ENCODE measurements at regions of chr5 and their contacts with region 1.

Region 1: DNA sequence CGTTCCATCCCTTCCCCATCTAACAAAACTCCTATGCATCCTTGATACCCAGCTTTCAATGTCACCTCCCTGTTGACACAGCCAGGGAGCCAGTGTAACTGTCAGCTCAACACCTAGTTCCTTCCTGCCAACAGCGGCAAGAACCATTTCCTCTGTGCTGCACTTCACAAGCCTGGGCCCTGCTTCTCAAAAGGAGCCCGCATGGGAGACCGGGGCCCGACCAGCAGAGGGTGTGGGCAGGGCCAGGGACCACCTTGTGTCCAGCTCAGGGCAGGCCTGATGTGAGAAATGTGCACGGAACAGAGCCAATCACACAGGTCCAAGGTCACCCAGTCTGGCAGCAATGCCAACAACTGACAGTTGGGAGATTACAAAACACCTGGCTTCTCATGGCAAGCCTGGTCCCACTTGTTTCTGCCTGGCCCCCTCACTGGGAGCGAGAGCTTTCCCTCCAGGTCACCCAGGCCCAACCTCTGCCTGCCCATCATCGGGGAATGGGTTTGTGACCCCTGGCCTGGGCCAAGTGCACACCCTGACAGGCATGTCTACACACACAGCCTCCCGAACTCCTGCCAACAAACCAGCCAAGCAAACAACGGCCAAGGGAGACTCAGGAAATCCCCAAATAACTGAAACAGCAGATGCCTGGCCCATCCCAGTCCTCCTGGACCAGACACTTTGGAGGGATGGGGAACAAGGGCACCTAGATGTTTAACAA is 3.1 kb downstream of the RNF44 start:
- DNase-seq: peak in 1 of 2 donors; percentile 35
- H3K4me3 ChIP-seq: no peak overlapping the region
- H3K27ac ChIP-seq: peak overlapping the region; percentile 26 to 95
- H3K4me1 ChIP-seq: peaks cover 4 to 20% of the 10 kb centered on the region in 2 donors
- H3K27me3 ChIP-seq: no peaks in the 10 kb centered on the region
- CTCF ChIP-seq: no peak
- POLR2A ChIP-seq: no peak

Region 2: DNA sequence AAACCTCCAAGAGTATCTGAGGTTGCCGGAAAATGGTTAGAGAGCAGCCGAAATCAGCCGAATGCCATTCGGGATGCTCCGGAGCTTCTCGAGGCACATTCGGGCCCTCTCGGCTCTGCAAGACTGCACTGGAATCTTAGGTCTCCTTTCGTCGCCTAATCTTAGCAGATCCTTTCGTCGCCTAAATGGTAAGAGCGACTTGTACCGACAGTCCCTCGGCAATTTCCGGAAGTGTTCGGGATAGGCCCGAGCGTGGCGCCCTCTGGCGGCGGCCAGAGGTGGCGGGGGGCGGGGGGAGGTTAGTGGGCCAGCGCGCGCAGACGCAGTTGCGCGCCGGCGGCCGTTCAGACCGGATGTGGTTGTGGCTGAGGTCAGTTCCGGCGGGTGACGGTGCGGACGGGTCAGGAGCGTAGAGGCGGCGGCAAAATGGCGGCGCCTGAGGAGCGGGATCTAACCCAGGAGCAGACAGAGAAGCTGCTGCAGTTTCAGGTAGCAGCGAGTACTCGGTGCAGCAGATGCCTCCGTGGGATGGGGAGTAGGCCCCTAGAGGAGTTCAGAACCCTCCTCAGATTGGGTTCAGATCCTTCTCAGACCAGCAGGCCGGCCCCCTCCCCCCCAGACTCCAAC is 86.0 kb before region 1 on chr5 and contains the start of gene FAF2:
- intact Hi-C with region 1: loop called (anchors 5 kb)
- DNase-seq: peak; percentile 95 to 99
- H3K4me3 ChIP-seq: peak within 1 kb of the TSS; percentile 74 to 100
- H3K27ac ChIP-seq: peak within 1 kb of the TSS; percentile 92 to 97
- H3K4me1 ChIP-seq: peaks cover 4 to 14% of the 10 kb centered on the region in 2 donors
- H3K27me3 ChIP-seq: no peaks in the 10 kb centered on the region
- CTCF ChIP-seq: peak; percentile 97 to 99 (median 98)
- POLR2A ChIP-seq: peak; percentile 80 to 92
- total RNA-seq, gene FAF2: 12.3 to 47.8 (median 32.5) TPM